ENCODE measurements at regions of chr6 and their contacts with region 1.

Region 1: GRCh38 chr6:25263657-25264056 is 15.5 kb upstream of the CARMIL1 start:
- DNase-seq: peak; percentile 83
- ATAC-seq: peak; percentile 89
- H3K4me3 ChIP-seq: no peak overlapping the region
- H3K27ac ChIP-seq: 0 out of 2 replicates have a peak overlapping the region, but pooled peaks have one; percentile 1
- H3K4me1 ChIP-seq: peaks cover 12% of the 10 kb centered on the region
- H3K27me3 ChIP-seq: no peaks in the 10 kb centered on the region
- CTCF ChIP-seq: no peak

Region 2: DNA sequence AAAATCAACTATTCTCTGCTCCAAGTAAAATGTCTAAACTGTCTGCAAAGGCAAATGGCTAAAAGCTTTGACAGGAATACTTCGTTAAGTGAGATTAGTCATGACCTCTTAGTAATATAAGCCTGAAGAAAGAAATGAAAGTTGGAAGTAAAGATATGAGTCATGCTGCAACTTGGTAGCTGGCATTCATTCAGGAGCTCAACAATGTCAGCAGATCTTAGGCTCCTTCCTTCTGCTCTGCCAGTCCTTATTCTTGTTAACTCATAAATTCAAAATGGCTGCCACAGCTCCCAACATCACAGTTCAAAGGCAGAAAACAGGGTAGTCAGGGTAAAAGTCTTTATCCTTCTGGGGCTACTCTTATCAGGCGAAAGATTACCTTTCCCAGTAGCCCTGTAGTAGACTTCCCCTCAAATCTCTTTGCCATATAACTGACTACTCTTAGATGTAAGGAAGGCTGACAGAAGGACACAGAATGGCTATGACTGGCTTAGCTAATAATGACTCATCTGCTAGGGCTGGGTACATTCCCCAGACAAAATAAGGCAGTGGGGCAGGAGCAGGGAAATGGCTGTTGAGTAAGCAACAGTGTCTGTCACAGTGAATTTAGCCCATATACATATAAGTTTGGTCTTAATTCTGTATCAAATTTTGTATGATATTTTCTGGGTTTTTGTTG is 520.3 kb before region 1 on chr6:
- CTCF ChIA-PET with region 1: no interaction called
- POLR2A ChIA-PET with region 1: no interaction called
- intact Hi-C with region 1: no loop called
- DNase-seq: peak; percentile 93
- ATAC-seq: peak; percentile 98
- H3K4me3 ChIP-seq: peak overlapping the region; percentile 56
- H3K27ac ChIP-seq: peak overlapping the region; percentile 97
- H3K4me1 ChIP-seq: peaks cover 24% of the 10 kb centered on the region
- H3K27me3 ChIP-seq: no peaks in the 10 kb centered on the region
- CTCF ChIP-seq: no peak

Region 3: DNA sequence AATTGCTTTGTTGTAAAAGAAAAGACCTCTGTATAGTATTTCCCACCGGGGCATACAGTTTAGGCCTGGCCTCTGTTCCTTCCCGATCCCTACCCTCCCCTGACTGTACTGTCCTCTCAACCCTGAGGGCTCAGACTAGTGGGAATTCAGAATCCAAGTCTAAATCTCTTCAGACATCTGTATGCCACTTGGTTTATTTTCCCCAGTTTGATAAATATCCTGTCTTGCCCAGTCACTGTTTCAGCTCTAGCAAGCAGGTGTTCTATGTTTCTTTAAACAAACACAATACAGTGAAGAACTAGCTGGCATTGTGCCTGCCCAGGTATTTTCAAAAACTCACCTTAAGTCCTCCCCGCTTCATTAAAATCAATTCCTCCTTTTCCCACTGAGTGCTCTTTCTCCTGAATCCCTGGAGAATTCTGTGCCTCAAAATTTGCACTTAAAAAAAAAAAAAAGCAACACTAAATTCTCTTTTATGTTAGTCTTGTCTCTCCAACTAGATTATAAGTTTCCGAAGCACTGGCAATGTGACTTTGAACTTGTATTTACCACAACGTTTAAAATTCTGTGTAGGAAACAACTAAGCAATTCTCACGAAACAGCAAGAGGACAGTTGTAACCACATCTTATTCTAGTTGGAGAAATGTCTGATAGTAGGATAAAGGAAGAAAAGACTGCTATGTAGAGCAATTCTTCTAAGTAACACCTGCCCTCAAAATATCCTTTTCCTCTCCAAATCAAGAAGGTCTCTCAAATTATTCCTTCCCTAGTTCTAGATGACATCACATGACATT is 96.5 kb before region 1 on chr6:
- CTCF ChIA-PET with region 1: no interaction called
- POLR2A ChIA-PET with region 1: no interaction called
- intact Hi-C with region 1: no loop called
- DNase-seq: no peak
- ATAC-seq: no peak
- H3K4me3 ChIP-seq: no peak overlapping the region
- H3K27ac ChIP-seq: no peak overlapping the region
- H3K4me1 ChIP-seq: 0 out of 2 replicates have a peak, but pooled peaks cover 10% of the 10 kb centered on the region
- H3K27me3 ChIP-seq: no peaks in the 10 kb centered on the region
- CTCF ChIP-seq: no peak

Region 4: GRCh38 chr6:25248100-25248499 is 15.6 kb before region 1 on chr6:
- CTCF ChIA-PET with region 1: interaction called, 3 read pairs
- POLR2A ChIA-PET with region 1: interaction called, 21 read pairs
- intact Hi-C with region 1: no loop called
- DNase-seq: peak; percentile 36
- ATAC-seq: peak; percentile 36; the same call in 1 of the 2 replicates
- H3K4me3 ChIP-seq: no peak overlapping the region
- H3K27ac ChIP-seq: no peak overlapping the region
- H3K4me1 ChIP-seq: 0 out of 2 replicates have a peak, but pooled peaks cover 9% of the 10 kb centered on the region
- H3K27me3 ChIP-seq: no peaks in the 10 kb centered on the region
- CTCF ChIP-seq: no peak

Region 5: GRCh38 chr6:25490018-25490801 is 226.6 kb after region 1 on chr6:
- CTCF ChIA-PET with region 1: interaction called, 18 read pairs
- POLR2A ChIA-PET with region 1: no interaction called
- intact Hi-C with region 1: loop called (anchors 1 kb)
- DNase-seq: peak; percentile 92
- ATAC-seq: peak; percentile 97
- H3K4me3 ChIP-seq: no peak overlapping the region
- H3K27ac ChIP-seq: no peak overlapping the region
- H3K4me1 ChIP-seq: peaks cover 4% of the 10 kb centered on the region; the same call in 1 of the 2 replicates
- H3K27me3 ChIP-seq: no peaks in the 10 kb centered on the region
- CTCF ChIP-seq: peak; percentile 90

Region 6: DNA sequence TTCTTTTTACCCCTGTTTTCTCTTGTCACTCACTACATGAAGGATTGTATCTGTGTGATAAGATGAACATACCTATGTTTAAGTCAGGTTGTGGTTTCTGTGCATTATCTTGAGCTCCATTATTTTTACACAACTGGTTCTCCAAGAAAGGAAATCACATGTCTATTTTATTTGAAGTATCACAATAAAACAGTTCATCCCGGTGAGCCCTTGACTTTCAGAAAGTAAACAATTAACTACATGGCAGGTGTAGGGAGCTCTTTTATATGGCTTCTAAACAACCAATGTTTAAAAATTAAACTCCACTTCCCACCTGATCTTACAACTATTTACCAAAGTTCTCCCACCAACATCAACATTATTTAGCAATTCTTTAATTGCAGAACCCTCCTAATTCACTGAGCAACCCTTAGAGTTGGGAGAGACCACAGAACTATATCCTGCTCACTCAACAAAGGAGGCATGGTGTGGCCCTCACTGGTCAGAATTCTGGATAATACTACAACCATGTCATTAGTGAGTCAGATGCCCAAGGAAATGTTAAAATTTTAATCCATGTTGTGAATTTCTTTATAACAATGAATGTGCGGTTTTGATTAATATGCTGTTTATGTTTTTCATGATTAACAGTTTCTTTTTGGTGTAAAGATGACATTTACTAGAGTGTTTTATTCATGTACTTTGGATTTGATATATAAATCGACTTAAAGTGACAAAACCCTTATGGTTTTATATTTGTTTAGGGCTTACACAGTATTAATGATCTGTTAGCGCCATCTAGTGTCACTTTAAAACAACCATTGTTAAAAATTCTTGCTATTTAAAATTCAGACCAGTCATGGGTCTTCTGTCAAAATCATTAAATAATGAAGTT is 338.4 kb after region 1 on chr6:
- CTCF ChIA-PET with region 1: interaction called, 3 read pairs
- POLR2A ChIA-PET with region 1: no interaction called
- intact Hi-C with region 1: loop called (anchors 1 kb)
- DNase-seq: peak; percentile 70
- ATAC-seq: peak; percentile 81
- H3K4me3 ChIP-seq: no peak overlapping the region
- H3K27ac ChIP-seq: no peak overlapping the region
- H3K4me1 ChIP-seq: peaks cover 7% of the 10 kb centered on the region; the same call in 1 of the 2 replicates
- H3K27me3 ChIP-seq: no peaks in the 10 kb centered on the region
- CTCF ChIP-seq: peak; percentile 87